Activated CD4-positive, alpha-beta T cell treated with anti-CD3 and anti-CD28 coated beads, Interleukin-2, amount 10 ng/mL, durations not matched to agents 24 days and 14 days (primary cell): ENCODE measurements at regions of chr22 and their contacts with region 1.

Region 1: DNA sequence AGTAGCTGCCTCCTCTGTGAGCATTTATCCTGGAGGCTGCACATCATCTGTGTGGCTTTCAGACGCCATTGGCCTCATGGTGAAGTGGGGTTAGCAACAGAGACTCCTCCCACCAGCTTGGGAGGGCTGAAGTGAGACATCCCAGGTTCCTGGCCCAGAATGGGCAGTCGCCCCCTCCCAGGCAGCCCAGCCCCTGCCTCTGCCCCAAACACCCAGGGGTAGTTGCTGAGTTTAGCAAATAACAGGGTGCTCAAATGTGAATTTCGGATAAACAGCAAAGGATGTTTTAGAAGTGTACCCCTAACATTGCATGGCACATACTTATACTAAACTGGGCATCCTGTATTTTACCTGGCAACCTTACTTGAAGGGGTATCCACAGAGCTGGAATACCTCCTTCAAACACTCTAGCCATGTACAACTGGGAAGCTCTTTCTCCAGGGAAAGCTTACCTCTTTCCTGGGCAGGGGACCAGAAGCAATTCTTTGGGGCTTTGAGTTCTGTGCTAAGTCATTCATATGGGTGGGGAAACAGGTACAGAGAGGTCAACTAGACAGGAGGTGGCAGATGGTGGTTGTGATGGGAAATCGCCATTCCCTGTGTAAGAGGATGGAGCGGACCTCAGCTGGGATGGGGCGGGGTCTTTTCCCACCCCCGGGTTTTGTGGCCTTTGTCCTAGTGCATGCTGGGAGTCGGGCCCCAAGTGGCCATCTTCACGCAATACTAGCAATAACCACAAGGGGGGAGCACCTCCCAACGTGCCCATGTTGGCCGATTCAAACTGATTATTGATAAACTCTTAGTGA is 19.3 kb downstream of the MTFP1 start:
- DNase-seq: peak; percentile 87
- H3K4me3 Mint-ChIP-seq: no peak overlapping the region
- H3K27ac Mint-ChIP-seq: no peak overlapping the region
- H3K4me1 Mint-ChIP-seq: peaks cover 23% of the 10 kb centered on the region
- H3K27me3 Mint-ChIP-seq: peaks cover 24% of the 10 kb centered on the region

Region 2: GRCh38 chr22:30459181-30460052 is 14.6 kb after region 1 on chr22:
- intact Hi-C with region 1: no loop called
- DNase-seq: peak; percentile 86
- H3K4me3 Mint-ChIP-seq: no peak overlapping the region
- H3K27ac Mint-ChIP-seq: no peak overlapping the region
- H3K4me1 Mint-ChIP-seq: peaks cover 8% of the 10 kb centered on the region
- H3K27me3 Mint-ChIP-seq: no peaks in the 10 kb centered on the region

Region 3: GRCh38 chr22:30485362-30485988 is 40.6 kb after region 1 on chr22:
- intact Hi-C with region 1: loop called (anchors 2 kb)
- DNase-seq: peak; percentile 94
- H3K4me3 Mint-ChIP-seq: no peak overlapping the region
- H3K27ac Mint-ChIP-seq: no peak overlapping the region
- H3K4me1 Mint-ChIP-seq: no peaks in the 10 kb centered on the region
- H3K27me3 Mint-ChIP-seq: peaks cover 3% of the 10 kb centered on the region

Region 4: GRCh38 chr22:30574997-30575671 is 130.3 kb after region 1 on chr22:
- intact Hi-C with region 1: no loop called
- DNase-seq: no peak
- H3K4me3 Mint-ChIP-seq: no peak overlapping the region
- H3K27ac Mint-ChIP-seq: no peak overlapping the region
- H3K4me1 Mint-ChIP-seq: no peaks in the 10 kb centered on the region
- H3K27me3 Mint-ChIP-seq: peaks cover 3% of the 10 kb centered on the region